ENCODE measurements at regions of chr12 and their contacts with region 1.

Region 1: DNA sequence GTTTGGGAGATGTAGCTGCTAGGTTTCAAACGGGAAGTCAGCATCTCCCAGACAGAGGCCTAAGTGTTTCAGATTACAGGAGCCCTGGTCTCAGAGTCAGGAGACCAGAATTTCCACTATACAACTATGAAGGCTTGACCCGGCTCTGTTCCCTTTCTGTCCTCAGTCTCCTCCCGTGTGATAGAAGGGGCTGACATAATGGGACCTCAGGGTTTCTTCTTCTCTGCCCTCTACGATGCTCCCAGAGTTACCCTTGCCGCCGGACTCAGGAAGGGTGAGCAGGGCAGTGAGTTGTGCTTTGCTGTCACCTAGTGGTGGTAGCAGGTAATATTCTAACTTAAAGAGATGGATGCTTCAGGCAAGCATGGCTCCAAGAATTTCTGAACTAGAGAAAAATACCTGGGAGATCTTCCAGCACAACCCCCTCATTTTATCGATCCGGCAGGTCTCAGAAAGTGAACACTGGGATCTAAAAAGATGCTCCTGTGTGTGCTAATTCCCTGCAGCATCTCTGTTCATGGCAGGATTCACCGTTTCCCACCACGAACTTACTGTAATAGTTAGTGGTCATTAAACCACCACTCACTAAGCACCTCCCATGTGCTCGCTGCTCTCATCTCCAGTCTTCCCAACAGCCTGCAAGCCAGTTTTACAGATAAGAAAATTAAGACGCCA is 84.4 kb downstream of the VWF start:
- DNase-seq: peak; percentile 64
- H3K4me3 Mint-ChIP-seq: no peak overlapping the region
- H3K27ac Mint-ChIP-seq: no peak overlapping the region
- H3K4me1 Mint-ChIP-seq: no peaks in the 10 kb centered on the region
- H3K27me3 Mint-ChIP-seq: peaks cover 5% of the 10 kb centered on the region

Region 2: GRCh38 chr12:5982106-5982505 is 57.9 kb before region 1 on chr12:
- CTCF ChIA-PET with region 1: interaction called, 16 read pairs
- DNase-seq: no peak
- H3K4me3 Mint-ChIP-seq: no peak overlapping the region
- H3K27ac Mint-ChIP-seq: no peak overlapping the region
- H3K4me1 Mint-ChIP-seq: no peaks in the 10 kb centered on the region
- H3K27me3 Mint-ChIP-seq: no peaks in the 10 kb centered on the region

Region 3: GRCh38 chr12:5988659-5989116 is 51.3 kb before region 1 on chr12:
- CTCF ChIA-PET with region 1: interaction called, 153 read pairs
- DNase-seq: peak; percentile 81
- H3K4me3 Mint-ChIP-seq: no peak overlapping the region
- H3K27ac Mint-ChIP-seq: no peak overlapping the region
- H3K4me1 Mint-ChIP-seq: no peaks in the 10 kb centered on the region
- H3K27me3 Mint-ChIP-seq: peaks cover 10% of the 10 kb centered on the region

Region 4: DNA sequence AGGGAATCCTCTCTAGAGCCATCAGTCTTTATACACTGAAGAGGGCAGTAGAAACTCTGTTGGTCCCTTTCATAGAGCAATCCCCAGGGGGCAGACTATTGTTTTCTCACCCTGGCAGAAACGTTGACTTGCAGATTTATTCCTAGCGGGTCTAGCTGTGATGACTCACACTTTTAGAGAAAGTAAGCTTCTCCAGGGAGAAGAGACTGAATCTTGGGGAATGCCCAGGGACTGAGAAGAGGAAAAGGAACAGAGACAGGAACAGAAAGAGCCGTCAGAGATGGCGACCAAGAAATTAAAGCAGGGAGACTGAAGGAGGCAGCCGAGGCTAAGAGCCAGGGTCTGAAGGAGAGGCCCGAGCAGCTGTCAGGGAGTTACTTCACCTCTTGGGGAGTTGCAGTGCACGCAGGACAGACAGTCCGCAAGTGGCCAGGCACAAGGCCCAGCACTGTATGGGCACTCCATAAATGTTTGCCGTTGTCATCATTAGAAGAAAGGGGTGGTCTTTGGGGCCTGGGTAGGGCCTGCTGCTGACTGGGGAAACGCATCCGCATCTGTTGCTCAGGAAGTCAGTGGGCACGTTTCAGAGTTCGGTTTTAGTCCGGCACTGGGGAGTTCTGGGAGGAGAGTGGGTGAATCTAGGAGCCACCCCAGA is 283.4 kb after region 1 on chr12:
- CTCF ChIA-PET with region 1: no interaction called
- DNase-seq: peak; percentile 49
- H3K4me3 Mint-ChIP-seq: peak overlapping the region; percentile 1
- H3K27ac Mint-ChIP-seq: peak overlapping the region; percentile 80
- H3K4me1 Mint-ChIP-seq: peaks cover 41% of the 10 kb centered on the region
- H3K27me3 Mint-ChIP-seq: peaks cover 10% of the 10 kb centered on the region